Pancreas (tissue), 10 donors: ENCODE measurements at regions of chr10 and their contacts with region 1.

Region 1: GRCh38 chr10:132023092-132023811 is 41.5 kb upstream of the BNIP3 start:
- DNase-seq: peak; percentile 76 to 97 (median 89)
- ATAC-seq: peak; percentile 91 to 99 (median 98)
- H3K4me3 ChIP-seq: peak overlapping the region in 2 of 4 donors; percentile 28 to 50
- H3K27ac ChIP-seq: no peak overlapping the region
- H3K4me1 ChIP-seq: peaks cover 0 to 3% (median 0%) of the 10 kb centered on the region in 3 donors
- H3K27me3 ChIP-seq: peaks cover 0 to 5% (median 2%) of the 10 kb centered on the region in 4 donors
- CTCF ChIP-seq: peak; percentile 75 to 95 (median 82)

Region 2: GRCh38 chr10:130834170-130834569 is 1189.1 kb before region 1 on chr10:
- intact Hi-C with region 1: no loop called
- DNase-seq: no peak
- ATAC-seq: no peak
- H3K4me3 ChIP-seq: no peak overlapping the region
- H3K27ac ChIP-seq: no peak overlapping the region
- H3K4me1 ChIP-seq: no peaks in the 10 kb centered on the region
- H3K27me3 ChIP-seq: no peaks in the 10 kb centered on the region
- CTCF ChIP-seq: no peak

Region 3: DNA sequence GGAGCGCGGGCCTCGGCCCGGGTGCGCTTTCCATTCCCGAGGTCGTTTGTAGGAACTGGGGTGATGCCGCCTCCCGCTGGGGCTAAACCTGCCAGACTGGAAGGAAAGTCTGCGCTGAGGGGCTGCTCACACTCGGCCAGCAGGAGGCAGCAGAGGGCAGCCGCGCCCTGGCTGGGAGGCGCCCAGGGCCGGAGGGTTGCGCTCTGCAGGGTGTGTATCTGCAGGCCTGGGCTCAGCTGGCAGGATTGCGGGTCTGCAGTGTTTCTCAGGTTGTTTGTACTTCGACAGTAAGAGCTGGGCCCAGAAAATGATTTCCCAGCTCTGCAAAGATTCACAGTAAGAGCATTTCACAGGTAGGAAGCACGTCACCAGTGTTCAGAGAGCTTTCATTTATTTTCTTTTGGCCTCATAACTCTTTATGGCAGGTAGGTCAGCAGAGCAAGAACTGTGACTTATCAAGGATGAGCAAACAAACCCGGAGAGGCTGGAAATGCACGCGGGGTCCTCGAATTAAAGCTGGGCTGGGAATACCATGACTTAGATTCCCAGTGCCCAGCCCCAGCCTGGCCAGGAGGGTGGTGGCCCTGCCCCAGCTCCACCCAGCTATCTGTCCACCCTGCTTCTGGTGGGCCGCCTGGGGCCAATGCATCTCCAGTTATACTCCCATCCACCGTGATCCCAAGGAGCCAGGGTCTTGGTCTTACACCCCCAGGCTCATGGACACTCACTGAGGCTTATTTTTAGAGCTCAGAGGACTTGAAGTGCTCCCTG is 137.7 kb before region 1 on chr10:
- intact Hi-C with region 1: loop called in 2 of 3 experiments (anchors 5 kb)
- DNase-seq: peak; percentile 72 to 98 (median 90)
- ATAC-seq: peak; percentile 95 to 100 (median 98)
- H3K4me3 ChIP-seq: peak overlapping the region in 1 of 4 donors; percentile 10
- H3K27ac ChIP-seq: no peak overlapping the region
- H3K4me1 ChIP-seq: no peaks in the 10 kb centered on the region
- H3K27me3 ChIP-seq: no peaks in the 10 kb centered on the region
- CTCF ChIP-seq: peak; percentile 92 to 98 (median 98)

Region 4: DNA sequence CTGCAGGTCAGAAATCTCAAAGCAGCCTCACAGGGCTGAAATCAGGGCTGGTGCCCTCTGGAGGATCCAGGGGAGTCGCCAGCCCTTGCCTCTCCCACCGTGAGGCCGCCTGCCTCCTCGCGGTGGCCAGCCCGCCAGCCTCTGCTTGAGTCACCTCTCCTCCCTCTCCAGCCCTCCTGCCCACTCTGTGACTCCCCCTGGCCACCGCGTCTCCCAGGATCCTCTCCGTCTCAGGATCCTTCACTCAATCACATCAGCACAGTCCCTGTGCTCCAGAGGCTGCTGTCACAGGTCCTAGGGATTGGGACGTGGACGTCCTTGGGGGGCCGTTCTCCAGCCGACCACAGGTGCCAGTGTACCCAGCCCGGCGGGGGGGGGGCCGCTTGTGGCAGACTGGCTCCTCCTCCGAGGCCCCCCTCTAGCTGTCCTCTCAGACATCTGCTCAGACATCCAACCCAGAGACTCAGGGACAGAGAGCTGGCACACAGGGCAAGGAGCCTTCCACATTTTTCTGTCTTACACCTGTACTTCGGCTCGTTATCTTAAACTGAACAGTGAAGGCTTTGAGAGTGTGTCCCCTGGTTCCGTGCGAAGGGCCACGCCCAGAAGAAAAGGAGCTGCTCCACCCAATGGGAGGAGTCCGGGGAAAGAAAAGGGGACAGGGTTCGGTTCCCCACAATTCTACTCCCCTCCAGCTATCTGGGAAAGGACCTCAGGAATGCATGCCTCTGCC is 131.9 kb before region 1 on chr10:
- intact Hi-C with region 1: loop called in 2 of 3 experiments (anchors 5 kb)
- DNase-seq: peak in 1 of 6 donors; percentile 73
- ATAC-seq: peak; percentile 44 to 91 (median 80)
- H3K4me3 ChIP-seq: peak overlapping the region in 1 of 4 donors; percentile 9
- H3K27ac ChIP-seq: no peak overlapping the region
- H3K4me1 ChIP-seq: no peaks in the 10 kb centered on the region
- H3K27me3 ChIP-seq: no peaks in the 10 kb centered on the region
- CTCF ChIP-seq: no peak

Region 5: DNA sequence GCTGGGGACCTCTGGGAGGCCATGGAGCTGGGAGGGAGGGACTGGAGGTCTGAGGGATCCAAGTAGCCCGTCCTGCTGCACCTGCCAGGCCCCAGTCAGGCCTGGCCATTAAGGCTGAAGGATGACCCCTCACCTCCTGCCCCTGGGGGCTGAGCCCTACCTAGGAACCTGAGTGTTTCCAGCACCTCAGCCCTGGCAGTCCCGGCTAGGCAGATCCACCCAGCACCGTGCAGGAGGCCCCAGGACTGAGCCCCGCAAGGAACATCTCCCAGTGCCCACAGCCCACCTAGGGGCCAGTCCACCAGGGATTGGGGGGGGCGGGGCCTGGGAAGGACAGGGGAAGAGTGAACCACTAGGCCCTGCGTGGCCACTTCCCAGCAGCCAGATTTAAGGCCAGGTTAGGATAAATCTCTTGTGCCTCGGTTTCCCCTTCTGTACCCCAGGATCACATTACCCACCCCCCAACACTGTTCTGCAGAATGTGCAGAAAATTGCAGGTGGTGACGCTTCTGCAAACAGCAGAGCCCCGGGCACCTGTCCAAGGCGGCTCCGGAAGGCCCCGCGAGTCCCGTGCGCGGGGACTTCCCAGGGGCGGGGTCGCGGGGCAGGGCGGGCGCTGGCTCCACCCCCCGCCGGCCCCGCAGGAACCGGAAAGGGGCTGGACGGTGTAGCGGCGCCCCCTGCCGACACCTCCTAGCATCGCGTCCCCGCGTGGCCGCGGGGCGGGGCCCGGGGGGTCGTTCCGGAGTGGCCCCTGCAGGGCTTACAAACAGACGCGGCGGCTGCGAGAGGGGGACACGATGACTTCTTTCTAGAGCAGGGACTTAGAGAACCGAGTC is 429.6 kb after region 1 on chr10:
- intact Hi-C with region 1: no loop called
- DNase-seq: peak; percentile 92 to 99 (median 96)
- ATAC-seq: peak; percentile 78 to 90 (median 87)
- H3K4me3 ChIP-seq: peak overlapping the region in 2 of 4 donors; percentile 5 to 34
- H3K27ac ChIP-seq: peak overlapping the region in 3 of 4 donors; percentile 25 to 51 (median 50)
- H3K4me1 ChIP-seq: peaks cover 18 to 22% (median 19%) of the 10 kb centered on the region in 3 donors
- H3K27me3 ChIP-seq: no peaks in the 10 kb centered on the region
- CTCF ChIP-seq: peak; percentile 98 to 99 (median 99)

Region 6: DNA sequence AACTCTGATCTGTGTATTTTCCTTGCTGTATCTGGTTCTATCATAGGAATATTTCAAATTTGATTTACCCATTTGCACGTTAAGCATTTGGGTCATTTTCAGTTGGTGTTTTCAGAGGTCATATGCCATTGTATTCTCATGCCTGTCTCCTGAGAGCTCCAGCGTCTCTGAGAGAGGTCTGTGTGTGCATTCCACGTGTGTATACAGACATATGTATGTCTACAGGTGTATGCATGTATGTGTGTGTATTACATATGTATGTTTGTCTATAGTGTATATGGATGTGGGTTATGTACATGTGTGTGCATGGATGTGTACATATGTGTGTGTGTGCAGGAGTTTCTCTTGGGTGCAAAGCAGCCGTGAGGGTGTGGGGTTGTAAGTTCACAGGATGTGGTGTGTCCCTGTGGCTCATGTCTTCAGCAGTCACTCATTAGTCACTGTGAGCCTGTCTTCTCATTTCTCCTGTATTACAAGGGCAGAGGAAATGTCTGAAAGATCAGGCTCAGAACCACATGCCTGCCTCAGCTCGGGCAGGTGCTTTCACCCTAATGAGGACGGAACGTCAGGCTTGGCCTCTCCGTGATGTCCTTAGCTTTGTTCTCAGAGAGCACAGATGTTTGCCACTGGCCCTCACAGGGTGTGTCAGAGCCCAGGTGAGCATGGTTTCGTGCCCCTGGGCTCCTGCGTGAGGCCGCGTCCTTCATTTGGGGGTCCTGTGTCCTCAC is 661.1 kb after region 1 on chr10:
- intact Hi-C with region 1: no loop called
- DNase-seq: peak in 2 of 6 donors; percentile 10 to 45
- ATAC-seq: peak in 2 of 4 donors; percentile 4 to 11
- H3K4me3 ChIP-seq: no peak overlapping the region
- H3K27ac ChIP-seq: peak overlapping the region; percentile 47 to 89 (median 74)
- H3K4me1 ChIP-seq: peaks cover 5 to 8% (median 7%) of the 10 kb centered on the region in 3 donors
- H3K27me3 ChIP-seq: no peaks in the 10 kb centered on the region
- CTCF ChIP-seq: no peak